ENCODE measurements at regions of chr6 and their contacts with region 1.

Region 1: GRCh38 chr6:86937219-86938079 is at the start of gene HTR1E:
- DNase-seq: no peak
- ATAC-seq: peak; percentile 89
- H3K4me3 ChIP-seq: no peak within 1 kb of the TSS
- H3K27ac ChIP-seq: no peak within 1 kb of the TSS
- H3K4me1 ChIP-seq: no peaks in the 10 kb centered on the region
- H3K27me3 ChIP-seq: peaks cover 4% of the 10 kb centered on the region in 2 experiments; a peak in 3 of 4 replicates
- CTCF ChIP-seq: peak; percentile 51 to 63 (median 52)
- EP300 ChIP-seq: no peak
- POLR2A ChIP-seq: no peak
- RAD21 ChIP-seq: peak; percentile 61
- polyA plus RNA-seq, gene HTR1E: not detected

Region 2: DNA sequence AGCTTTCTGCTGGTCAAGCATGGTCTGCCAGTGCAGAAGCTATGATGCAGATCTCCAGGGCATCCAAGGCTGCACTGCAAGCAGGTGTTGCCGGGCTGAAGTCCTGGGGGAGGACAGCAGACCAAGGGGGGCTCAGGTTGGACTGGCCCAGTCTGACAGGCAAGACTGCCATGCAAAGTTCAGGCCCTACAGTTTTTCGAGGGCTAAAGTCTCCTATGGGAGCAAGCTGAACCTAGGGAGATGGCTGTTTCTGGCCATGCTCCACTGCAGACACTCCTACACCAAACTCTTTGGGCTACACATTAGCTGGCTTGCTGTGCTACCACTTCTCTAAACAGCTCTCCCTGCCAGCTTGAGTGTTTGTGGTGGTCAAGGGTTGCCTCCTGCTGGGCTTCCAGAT is 1164.8 kb before region 1 on chr6:
- CTCF ChIA-PET with region 1: no interaction called
- POLR2A ChIA-PET with region 1: no interaction called
- RAD21 ChIA-PET with region 1: no interaction called
- SMC1A ChIA-PET with region 1: no interaction called
- in situ Hi-C with region 1: no loop called
- intact Hi-C with region 1: loop called (anchors 5 kb)
- DNase-seq: no peak
- ATAC-seq: no peak; the same call in 1 of the 3 replicates
- H3K4me3 ChIP-seq: no peak overlapping the region
- H3K27ac ChIP-seq: no peak overlapping the region
- H3K4me1 ChIP-seq: no peaks in the 10 kb centered on the region
- H3K27me3 ChIP-seq: no peaks in the 10 kb centered on the region
- CTCF ChIP-seq: no peak; a peak in 1 of 6 replicates
- EP300 ChIP-seq: no peak
- POLR2A ChIP-seq: no peak
- RAD21 ChIP-seq: no peak

Region 3: GRCh38 chr6:86537263-86537861 is 400.1 kb before region 1 on chr6:
- CTCF ChIA-PET with region 1: no interaction called
- POLR2A ChIA-PET with region 1: no interaction called
- RAD21 ChIA-PET with region 1: no interaction called
- SMC1A ChIA-PET with region 1: no interaction called
- in situ Hi-C with region 1: no loop called
- intact Hi-C with region 1: no loop called
- DNase-seq: no peak
- ATAC-seq: no peak
- H3K4me3 ChIP-seq: no peak overlapping the region
- H3K27ac ChIP-seq: no peak overlapping the region
- H3K4me1 ChIP-seq: no peaks in the 10 kb centered on the region
- H3K27me3 ChIP-seq: no peaks in the 10 kb centered on the region
- CTCF ChIP-seq: no peak
- EP300 ChIP-seq: no peak
- POLR2A ChIP-seq: no peak
- RAD21 ChIP-seq: no peak

Region 4: DNA sequence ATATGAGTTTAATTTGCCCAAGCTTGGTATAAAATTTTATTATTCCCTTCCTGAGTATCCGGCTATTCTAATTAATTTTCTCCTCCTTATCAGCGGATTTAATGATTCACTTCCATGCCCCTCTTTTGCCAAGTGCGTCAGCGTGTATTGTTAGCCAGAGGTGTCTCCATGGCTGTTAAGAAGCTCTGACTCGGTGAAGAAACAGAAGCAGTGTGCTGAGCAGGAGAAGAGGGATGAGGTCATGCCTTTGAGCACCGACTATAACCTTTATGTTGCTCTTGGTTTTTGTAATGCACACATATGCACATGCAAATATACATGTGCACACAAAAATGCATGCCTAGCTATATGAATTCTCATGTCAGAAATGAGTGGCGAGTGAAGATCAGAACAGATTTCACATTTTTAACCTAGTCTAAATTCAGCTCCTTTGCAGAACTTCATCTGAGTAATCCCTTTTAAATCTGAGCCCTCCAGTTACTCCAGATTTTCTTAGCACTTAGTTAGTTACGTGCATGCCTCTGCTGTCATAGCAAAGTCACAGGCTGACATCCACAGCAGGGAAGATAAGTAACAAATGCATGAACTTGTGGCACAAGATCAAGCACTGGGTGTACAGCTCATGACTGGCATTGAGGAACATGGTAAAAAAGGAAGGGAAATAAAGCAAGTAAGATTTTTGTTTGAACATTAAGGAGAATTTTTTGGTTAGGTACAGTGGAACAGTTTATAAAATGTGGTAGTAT is 24.2 kb after region 1 on chr6:
- CTCF ChIA-PET with region 1: no interaction called
- POLR2A ChIA-PET with region 1: no interaction called
- RAD21 ChIA-PET with region 1: no interaction called
- SMC1A ChIA-PET with region 1: no interaction called
- in situ Hi-C with region 1: no loop called
- intact Hi-C with region 1: no loop called
- DNase-seq: no peak
- ATAC-seq: no peak
- H3K4me3 ChIP-seq: no peak overlapping the region
- H3K27ac ChIP-seq: no peak overlapping the region
- H3K4me1 ChIP-seq: no peaks in the 10 kb centered on the region
- H3K27me3 ChIP-seq: no peaks in the 10 kb centered on the region
- CTCF ChIP-seq: no peak
- EP300 ChIP-seq: no peak
- POLR2A ChIP-seq: no peak
- RAD21 ChIP-seq: no peak